Activated naive CD4-positive, alpha-beta T cell treated with anti-CD3 and anti-CD28 coated beads, Interleukin-2, amount 10 ng/mL, durations not matched to agents 7 days and 5 days (primary cell): ENCODE measurements at regions of chr7 and their contacts with region 1.

Region 1: DNA sequence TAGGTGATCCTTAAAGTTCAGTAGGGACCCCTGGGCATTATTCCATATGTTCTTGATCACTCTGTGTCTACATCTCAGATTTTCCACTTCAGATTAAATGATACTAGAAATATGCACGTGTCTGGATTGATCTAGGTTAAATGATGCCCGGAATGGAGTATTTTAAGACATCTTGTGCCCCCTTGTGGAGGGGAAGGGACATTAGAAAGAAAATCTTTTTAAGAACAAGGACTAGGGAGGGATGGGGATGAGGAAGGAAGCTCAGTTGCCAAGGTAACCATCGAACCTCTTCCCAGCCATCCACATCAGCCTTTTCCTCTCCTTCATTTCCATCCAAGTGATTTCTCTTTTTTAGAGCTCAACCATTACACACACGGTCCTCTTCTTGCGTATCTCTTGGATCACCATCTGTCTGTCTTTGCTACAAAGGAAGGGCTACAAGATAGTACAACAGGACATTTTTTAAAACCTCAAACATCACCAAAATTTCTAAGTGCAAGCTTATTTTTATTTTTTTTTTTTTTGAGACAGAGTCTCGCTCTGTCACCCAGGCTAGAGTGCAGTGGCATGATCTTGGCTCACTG is 40.5 kb downstream of the PRSS2 start:
- DNase-seq: peak; percentile 54
- H3K4me3 Mint-ChIP-seq: peak overlapping the region; percentile 37
- H3K27ac Mint-ChIP-seq: peak overlapping the region; percentile 100
- H3K4me1 Mint-ChIP-seq: peaks cover 83% of the 10 kb centered on the region
- H3K27me3 Mint-ChIP-seq: peaks cover 1% of the 10 kb centered on the region

Region 2: DNA sequence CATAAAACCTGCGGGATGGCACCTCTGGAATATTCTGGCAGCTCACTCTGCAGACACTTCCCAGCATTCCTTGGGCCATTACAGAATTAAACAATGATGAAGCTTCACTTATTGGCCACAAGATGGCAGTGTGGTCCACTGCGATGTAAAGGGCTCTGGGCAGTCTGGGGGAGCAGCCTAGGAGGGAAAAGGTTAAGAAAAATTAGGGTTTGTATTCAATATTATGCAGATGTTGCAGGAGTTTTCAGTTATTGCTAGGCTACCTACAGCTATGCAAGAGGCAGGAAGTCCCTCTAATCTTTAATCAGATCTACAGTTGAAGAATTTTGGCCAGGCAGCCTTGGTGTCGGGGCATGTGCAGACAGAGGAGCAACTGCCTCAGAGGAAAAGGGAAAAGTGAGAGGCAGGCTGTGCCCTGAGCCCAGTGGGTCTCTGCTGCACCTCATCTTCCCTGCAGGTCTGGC is 295.2 kb before region 1 on chr7:
- CTCF ChIA-PET with region 1: interaction called, 11 read pairs
- DNase-seq: peak; percentile 50
- H3K4me3 Mint-ChIP-seq: no peak overlapping the region
- H3K27ac Mint-ChIP-seq: no peak overlapping the region
- H3K4me1 Mint-ChIP-seq: peaks cover 46% of the 10 kb centered on the region
- H3K27me3 Mint-ChIP-seq: peaks cover 6% of the 10 kb centered on the region

Region 3: GRCh38 chr7:142557971-142558582 is 253.2 kb before region 1 on chr7:
- CTCF ChIA-PET with region 1: interaction called, 11 read pairs
- DNase-seq: peak; percentile 70
- H3K4me3 Mint-ChIP-seq: peak overlapping the region; percentile 39
- H3K27ac Mint-ChIP-seq: no peak overlapping the region
- H3K4me1 Mint-ChIP-seq: peaks cover 17% of the 10 kb centered on the region
- H3K27me3 Mint-ChIP-seq: peaks cover 43% of the 10 kb centered on the region

Region 4: DNA sequence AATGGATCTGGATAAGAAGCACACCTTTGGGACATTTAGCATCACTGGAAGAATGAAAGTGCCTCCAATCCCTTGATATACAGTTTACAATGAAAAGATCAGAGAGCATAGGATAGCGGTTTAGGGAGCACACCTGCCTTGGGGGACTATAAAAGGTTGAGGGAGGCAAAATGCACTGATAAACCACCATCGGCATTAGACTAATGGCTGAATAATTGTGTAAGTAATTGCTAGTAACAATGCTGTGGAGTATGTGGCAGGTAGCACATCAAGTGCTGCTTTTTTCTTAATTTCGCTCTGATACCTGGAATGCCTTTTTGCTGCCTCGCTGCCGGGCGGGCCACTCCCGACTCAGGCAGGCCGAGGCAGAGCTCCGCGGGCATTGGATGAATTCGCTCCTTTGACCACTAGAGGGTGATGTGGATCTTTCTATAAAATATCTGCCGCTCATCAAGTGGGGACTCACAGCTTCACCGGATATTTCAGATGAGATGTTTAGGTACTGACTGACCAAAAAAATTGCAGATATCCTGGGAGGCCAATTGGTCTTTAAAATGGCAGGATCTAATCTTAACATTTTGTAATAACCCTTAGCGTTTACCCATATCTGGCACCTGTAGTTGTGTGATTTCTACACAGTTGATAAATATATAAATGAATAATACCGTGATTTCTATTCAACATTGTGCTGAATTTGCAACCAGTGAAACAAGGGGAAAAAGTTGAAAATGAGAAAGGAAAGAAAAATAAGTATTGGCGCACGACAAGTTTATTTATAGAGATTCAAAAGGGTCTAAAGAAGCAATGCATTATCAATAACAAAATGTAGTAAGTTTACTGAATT is 178.7 kb before region 1 on chr7:
- CTCF ChIA-PET with region 1: interaction called, 18 read pairs
- DNase-seq: peak; percentile 61
- H3K4me3 Mint-ChIP-seq: no peak overlapping the region
- H3K27ac Mint-ChIP-seq: peak overlapping the region; percentile 24
- H3K4me1 Mint-ChIP-seq: peaks cover 20% of the 10 kb centered on the region
- H3K27me3 Mint-ChIP-seq: peaks cover 8% of the 10 kb centered on the region

Region 5: GRCh38 chr7:142782922-142783900 is 28.0 kb before region 1 on chr7:
- CTCF ChIA-PET with region 1: interaction called, 346 read pairs
- DNase-seq: peak; percentile 86
- H3K4me3 Mint-ChIP-seq: peak overlapping the region; percentile 75
- H3K27ac Mint-ChIP-seq: peak overlapping the region; percentile 100
- H3K4me1 Mint-ChIP-seq: peaks cover 22% of the 10 kb centered on the region
- H3K27me3 Mint-ChIP-seq: no peaks in the 10 kb centered on the region

Region 6: DNA sequence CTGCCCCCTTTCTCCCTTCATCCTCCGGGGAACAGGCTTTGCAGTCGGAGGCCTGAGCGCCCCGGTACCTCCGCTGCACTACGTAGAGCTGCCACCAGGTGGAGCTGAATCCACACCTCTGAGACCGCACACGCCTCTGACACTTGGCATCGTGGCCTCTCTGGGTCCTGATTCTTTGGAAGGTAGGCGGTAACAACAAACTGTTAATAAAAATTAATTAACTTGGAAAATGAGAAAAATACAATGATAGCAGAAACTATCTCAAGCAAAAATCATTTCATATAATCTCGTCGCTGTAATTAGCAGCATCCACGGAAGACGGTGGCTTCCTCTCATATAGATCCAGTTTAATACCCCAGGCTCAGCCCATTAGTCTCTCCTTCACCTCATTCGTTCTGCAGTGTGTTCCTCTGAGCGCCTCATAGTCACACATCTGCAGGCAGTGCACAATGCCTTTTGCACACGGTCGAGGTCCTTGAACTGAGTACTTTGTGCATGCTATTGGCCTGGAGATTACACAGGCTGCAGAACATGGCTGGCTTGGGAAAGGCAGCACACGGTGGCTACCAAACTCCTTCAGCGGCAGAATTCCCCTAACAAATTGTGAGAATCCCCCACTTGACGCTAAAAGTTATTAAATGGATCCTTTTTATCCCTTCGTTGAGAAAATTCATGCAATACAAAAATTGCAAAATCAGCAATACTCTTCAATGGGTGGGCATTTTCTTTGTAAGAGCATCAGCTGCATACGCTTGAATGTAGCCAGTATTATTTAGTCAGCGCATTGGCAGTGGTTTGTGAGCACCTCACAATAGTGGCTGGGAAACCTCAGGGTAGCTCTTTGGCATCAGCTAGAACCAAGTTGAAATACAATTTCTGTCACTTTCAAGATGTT is 197.0 kb after region 1 on chr7:
- CTCF ChIA-PET with region 1: interaction called, 18 read pairs
- DNase-seq: peak; percentile 84
- H3K4me3 Mint-ChIP-seq: no peak overlapping the region
- H3K27ac Mint-ChIP-seq: no peak overlapping the region
- H3K4me1 Mint-ChIP-seq: peaks cover 4% of the 10 kb centered on the region
- H3K27me3 Mint-ChIP-seq: peaks cover 27% of the 10 kb centered on the region

Region 7: GRCh38 chr7:143120696-143121405 is 309.6 kb after region 1 on chr7:
- CTCF ChIA-PET with region 1: no interaction called
- DNase-seq: no peak
- H3K4me3 Mint-ChIP-seq: no peak overlapping the region
- H3K27ac Mint-ChIP-seq: no peak overlapping the region
- H3K4me1 Mint-ChIP-seq: no peaks in the 10 kb centered on the region
- H3K27me3 Mint-ChIP-seq: no peaks in the 10 kb centered on the region